Mammary epithelial cell (primary cell): ENCODE measurements at regions of chr10 and their contacts with region 1.

Region 1: DNA sequence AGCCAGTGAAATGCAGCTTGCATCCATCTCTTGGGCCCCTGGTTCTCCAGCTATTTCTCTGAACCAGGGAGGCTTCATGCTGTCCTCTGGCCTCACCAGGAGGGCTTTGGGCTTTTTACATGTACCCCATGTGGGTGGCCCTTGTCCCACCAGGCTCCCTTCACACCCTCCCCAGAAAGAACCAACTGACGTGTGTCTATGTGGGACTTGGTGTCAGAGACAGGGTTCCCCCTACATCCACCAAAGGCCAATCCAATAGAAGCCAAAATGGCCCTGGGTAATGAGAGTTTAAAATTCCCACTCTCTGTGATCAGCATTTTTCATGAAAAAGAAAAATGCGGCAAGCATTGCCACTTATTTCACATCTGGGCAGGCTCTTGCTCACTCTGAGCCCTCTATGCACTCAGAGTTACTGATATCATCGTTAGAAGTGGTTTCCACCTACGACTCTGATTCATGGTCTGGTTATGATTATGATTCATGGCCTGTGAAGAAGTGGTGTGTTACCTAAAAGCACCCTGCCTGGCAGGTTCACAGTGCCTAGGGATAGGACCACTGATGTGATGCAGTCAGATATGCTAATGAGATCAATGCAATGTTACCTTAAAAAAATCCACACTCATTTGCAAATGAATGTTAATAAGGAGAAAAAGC is 133.5 kb downstream of the BUB3 start:
- DNase-seq: peak; percentile 96
- H3K4me3 ChIP-seq: no peak overlapping the region
- H3K27ac ChIP-seq: no peak overlapping the region
- H3K4me1 ChIP-seq: peaks cover 6% of the 10 kb centered on the region
- H3K27me3 ChIP-seq: no peaks in the 10 kb centered on the region
- CTCF ChIP-seq: no peak

Region 2: DNA sequence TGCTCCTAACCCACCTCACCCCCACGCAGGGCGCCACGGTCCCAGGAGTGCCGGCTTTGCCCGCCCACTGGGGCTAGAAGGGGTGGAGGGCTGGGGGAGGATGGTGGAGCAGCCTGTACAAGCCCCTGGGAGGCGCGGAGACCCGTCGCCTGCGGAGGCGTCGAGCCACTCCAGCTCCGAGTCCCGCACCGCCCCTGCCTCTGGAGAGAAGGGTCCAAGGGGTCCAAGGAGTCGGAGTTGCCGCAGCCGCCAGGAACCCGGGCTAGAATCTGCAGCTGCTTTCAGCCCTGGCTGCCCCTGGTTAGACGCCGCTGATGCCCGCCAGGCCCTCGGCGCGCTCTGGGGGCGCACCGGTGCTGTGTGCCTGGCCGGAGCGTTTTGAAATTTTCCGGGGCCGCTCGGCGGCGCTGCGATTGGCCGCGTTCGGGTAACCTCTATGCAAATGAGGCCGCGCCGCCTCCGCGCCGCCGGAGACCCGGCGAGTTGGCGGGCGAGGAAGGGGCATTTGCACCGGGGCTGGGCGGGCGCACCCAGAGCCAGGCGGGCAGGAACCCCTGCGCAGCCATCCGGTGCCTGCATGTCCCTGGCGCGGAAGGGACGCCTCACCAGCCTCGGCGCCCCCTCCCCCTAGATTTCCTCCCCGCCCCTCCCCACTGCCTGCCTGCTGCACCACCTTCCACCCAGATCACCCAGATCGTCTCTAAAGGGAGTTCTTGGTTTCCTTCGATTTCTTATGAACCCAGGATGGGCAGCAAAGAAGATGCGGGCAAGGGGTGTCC is 139.9 kb before region 1 on chr10 and contains the start of gene HMX2:
- CTCF ChIA-PET with region 1: no interaction called
- dilution Hi-C with region 1: no loop called
- in situ Hi-C with region 1: no loop called
- intact Hi-C with region 1: loop called (anchors 5 kb)
- DNase-seq: peak; percentile 9
- H3K4me3 ChIP-seq: peak within 1 kb of the TSS in 1 of 3 experiments; percentile 1
- H3K27ac ChIP-seq: no peak within 1 kb of the TSS
- H3K4me1 ChIP-seq: peaks cover 33% of the 10 kb centered on the region
- H3K27me3 ChIP-seq: peaks cover 72% of the 10 kb centered on the region
- CTCF ChIP-seq: no peak
- total RNA-seq, gene HMX2: not detected

Region 3: GRCh38 chr10:123154092-123154921 is 133.4 kb before region 1 on chr10 and contains the start of gene BUB3:
- CTCF ChIA-PET with region 1: interaction called, 4 read pairs
- dilution Hi-C with region 1: no loop called
- in situ Hi-C with region 1: no loop called
- intact Hi-C with region 1: loop called (anchors 5 kb)
- DNase-seq: peak; percentile 99
- H3K4me3 ChIP-seq: peak within 1 kb of the TSS; percentile 80 to 99 (median 95)
- H3K27ac ChIP-seq: peak within 1 kb of the TSS; percentile 88
- H3K4me1 ChIP-seq: peaks cover 48% of the 10 kb centered on the region
- H3K27me3 ChIP-seq: peaks cover 19% of the 10 kb centered on the region
- CTCF ChIP-seq: peak in 1 of 2 donors; percentile 34
- total RNA-seq, gene BUB3: 137 to 158 TPM

Region 4: DNA sequence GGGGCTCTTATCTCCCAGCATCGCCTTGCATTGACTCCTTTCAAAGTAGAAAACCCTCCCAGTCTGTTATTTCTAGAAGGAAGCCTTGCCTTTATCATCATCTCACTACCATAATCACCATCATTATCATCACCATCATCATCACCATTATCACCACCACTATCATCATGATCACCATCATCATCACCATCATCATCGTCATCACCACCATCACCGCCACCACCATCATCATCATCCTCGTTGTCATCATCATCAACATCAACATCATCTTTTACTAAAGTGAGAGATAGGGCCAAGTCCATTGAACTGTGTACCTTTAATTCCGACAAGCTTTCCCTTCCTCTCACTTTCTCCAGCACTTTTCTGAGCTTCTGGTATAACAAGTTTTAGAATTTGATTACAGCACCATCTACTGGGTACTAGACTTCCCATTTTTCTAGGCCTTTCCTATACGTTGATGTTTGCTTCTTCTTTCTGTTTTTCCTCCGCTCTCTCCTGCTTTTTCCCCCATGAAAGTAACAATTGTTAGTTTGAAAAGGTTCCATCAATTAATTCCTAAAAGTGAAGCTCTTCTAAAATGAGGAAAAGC is 92.9 kb after region 1 on chr10:
- CTCF ChIA-PET with region 1: interaction called, 3 read pairs
- dilution Hi-C with region 1: no loop called
- in situ Hi-C with region 1: no loop called
- intact Hi-C with region 1: loop called (anchors 1 kb)
- DNase-seq: peak; percentile 32
- H3K4me3 ChIP-seq: no peak overlapping the region
- H3K27ac ChIP-seq: no peak overlapping the region
- H3K4me1 ChIP-seq: peaks cover 12% of the 10 kb centered on the region
- H3K27me3 ChIP-seq: no peaks in the 10 kb centered on the region
- CTCF ChIP-seq: peak; percentile 19 to 58